ENCODE measurements at regions of chr1 and their contacts with region 1.

Region 1: DNA sequence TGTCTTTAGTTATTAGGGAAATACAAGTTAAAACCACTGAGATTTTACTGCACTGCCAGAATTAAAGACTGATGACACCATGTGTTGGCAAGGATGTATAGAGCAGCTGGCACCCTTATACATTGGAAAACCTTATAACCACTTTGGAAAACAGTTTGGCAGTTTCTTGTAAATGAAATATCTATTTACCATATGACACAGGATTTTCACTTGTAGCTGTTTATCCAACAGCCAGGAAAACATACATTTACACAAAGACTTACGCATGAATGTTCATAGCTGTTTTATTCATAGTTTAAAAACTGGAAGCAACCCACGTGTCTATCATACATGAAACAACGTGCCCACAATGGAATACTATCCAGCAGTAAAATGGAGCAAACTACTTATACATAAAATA is 45.3 kb downstream of the PRRC2C start:
- DNase-seq: no peak
- ATAC-seq: no peak
- H3K4me3 ChIP-seq: no peak overlapping the region
- H3K27ac ChIP-seq: no peak overlapping the region
- H3K4me1 ChIP-seq: no peaks in the 10 kb centered on the region
- H3K27me3 ChIP-seq: no peaks in the 10 kb centered on the region
- CTCF ChIP-seq: no peak
- POLR2A ChIP-seq: no peak

Region 2: DNA sequence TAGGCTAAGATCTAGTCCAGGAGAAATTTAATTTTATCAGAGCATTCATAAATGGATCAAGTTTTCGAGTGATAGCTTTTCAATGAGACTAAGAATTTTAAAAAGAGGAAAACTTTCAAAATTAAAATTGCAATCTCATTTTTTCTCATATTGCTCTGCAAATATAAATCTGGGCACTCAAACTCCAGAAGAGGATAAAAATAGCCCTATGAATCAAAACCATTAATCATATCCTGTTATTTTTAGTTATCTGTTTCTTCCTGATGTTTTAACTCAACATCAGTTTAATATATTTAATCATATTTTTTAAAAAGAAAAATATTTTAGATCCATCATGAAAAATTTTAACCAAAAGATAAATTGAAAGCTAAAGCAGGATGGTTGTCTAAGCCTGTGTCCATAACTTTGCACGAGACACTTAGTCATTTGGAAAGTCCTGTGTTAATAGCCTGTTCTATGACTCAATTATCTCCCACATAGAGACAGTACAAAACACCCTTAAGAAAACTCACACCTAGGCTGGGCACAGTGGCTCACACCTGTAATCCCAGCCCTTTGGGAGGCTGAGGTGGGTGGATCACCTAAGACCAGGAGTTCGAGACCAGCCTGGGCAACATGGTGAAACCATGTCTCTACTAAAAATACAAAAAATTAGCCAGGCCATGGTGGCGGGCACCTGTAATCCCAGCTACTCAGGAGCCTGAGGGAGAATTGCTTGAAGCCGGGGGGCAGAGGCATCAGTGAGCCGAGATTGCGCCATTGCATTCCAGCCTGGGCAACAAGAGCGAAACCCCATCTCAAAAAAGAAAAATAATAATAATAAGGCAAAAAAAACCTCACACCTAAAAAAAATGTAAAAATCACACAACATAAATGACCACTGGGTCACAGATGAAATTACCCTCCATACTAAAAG is 62.3 kb before region 1 on chr1:
- intact Hi-C with region 1: no loop called
- DNase-seq: no peak
- ATAC-seq: no peak
- H3K4me3 ChIP-seq: no peak overlapping the region
- H3K27ac ChIP-seq: no peak overlapping the region
- H3K4me1 ChIP-seq: no peaks in the 10 kb centered on the region
- H3K27me3 ChIP-seq: no peaks in the 10 kb centered on the region
- CTCF ChIP-seq: no peak
- POLR2A ChIP-seq: no peak

Region 3: DNA sequence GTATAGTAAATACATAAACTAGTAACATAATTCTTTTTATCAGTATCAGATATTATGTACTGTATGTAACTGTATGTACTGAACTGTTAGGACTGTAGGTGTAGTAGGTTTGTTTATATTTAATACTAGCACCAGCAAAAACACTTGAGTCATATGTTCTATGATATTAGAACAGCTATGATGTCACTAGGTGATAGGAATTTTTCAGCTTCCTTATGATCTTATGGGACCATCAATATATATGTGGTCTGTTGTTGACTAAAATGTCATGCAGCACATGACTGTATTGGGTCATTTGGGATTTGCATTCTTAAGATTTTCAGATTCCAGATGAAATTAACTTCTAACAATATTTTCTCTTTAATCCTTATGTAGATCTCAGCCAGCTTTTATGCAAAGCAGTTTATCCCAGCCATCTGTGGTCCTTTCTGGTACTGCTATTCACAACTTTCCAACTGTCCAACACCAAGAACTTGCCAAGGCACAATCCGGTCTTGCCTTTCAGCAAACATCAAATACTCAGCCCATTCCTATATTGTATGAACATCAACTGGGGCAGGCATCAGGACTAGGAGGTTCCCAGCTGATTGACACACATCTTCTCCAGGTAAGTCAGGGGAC is 53.0 kb after region 1 on chr1:
- intact Hi-C with region 1: loop called in 1 of 2 experiments (anchors 10 kb)
- DNase-seq: no peak
- ATAC-seq: no peak
- H3K4me3 ChIP-seq: no peak overlapping the region
- H3K27ac ChIP-seq: no peak overlapping the region
- H3K4me1 ChIP-seq: no peaks in the 10 kb centered on the region
- H3K27me3 ChIP-seq: no peaks in the 10 kb centered on the region
- CTCF ChIP-seq: no peak
- POLR2A ChIP-seq: no peak

Measured in right lobe of liver (tissue), 6 donors.